ENCODE measurements at regions of chr1 and their contacts with region 1.

Region 1: DNA sequence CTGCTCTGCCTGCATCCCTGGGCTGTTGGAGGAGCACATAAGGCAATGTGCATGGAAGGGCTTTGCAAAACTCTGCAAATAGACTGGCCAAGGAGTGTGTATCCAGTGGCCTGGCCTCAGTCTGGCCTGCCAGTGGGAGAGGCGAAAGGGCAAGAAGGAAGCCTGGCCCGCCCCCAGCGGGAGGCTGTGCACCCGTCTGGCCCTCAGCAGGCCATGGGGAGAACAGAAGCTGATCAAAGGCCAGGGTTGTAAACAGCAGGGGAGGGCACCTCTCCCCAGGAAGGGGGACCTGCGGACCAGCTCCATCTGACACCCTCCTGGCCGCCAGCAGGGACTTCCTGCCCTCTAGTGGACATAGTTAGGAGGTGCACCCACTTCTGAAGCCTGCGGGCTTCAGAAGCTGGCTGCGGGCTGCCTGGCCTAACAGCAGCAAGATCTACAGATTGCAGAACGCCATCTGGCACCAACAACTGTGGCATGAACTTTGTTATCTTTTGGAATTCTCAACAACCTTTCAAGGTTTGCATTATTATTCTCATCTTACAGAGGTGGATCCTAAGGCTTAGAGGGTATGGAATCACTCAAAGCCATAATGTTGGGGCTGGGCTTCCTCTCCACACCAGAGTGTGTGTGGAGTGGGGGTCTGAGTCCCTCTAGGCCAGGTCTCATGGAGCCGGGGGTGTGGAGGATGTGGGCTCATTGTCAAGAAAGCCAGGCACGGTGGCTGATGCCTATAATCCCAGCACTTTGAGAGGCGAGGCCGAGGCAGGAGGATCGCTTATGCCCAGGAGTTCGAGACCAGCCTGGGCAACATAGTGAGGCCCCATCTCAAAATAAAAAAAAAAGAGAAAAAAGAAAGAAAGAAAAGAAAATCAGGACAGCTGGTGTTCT is 18.9 kb upstream of the CDK18 start:
- DNase-seq: peak; percentile 48 to 65
- H3K4me3 ChIP-seq: no peak overlapping the region
- H3K27ac ChIP-seq: no peak overlapping the region
- H3K4me1 ChIP-seq: no peaks in the 10 kb centered on the region
- H3K27me3 ChIP-seq: no peaks in the 10 kb centered on the region
- CTCF ChIP-seq: peak; percentile 85 to 96 (median 90)
- POLR2A ChIP-seq: no peak

Region 2: GRCh38 chr1:205344066-205344928 is 141.3 kb before region 1 on chr1:
- intact Hi-C with region 1: loop called (anchors 10 kb)
- DNase-seq: no peak
- H3K4me3 ChIP-seq: peak overlapping the region in 1 of 2 donors; percentile 36
- H3K27ac ChIP-seq: no peak overlapping the region
- H3K4me1 ChIP-seq: peaks cover 0 to 12% of the 10 kb centered on the region in 2 donors
- H3K27me3 ChIP-seq: peaks cover 0 to 12% of the 10 kb centered on the region in 2 donors
- CTCF ChIP-seq: no peak
- POLR2A ChIP-seq: no peak

Region 3: DNA sequence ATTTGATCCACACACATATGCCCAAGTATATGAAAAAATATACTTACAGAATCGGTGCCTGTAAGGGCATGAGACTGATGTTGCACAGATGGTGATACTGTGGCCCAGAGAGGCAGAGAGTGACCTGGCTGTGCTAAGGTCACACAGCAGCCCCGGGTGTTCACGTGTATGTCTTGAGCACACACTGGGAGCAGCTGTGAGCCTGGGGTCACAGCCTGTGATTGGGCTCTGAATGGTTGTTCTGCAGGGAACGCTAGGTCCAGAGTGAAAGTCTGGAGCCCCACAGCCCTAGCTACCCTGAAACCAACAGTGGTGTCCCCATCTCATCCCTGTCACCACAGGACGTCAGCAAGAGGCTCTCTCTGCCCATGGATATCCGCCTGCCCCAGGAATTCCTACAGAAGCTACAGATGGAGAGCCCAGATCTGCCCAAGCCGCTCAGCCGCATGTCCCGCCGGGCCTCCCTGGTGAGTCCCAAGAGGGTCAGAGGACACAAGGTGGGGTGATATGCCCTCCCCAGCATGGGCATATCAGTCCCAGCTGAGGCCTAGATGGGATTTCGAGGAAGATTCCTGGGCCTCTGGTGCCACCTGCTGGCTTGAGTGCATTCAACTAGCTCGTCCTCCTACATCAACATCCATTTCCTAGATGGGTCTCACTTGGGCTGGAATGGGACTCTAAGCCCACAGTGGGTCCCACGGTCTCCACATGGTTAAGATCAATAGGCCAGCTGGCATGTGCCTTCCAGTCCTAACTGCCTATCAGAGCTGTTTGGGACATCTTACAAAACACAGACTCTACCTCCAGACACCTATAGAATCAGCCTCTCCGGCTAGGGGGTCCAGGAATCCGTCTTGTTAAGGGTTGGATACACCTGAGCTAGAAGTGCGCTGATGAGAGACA is 38.6 kb after region 1 on chr1:
- intact Hi-C with region 1: loop called (anchors 5 kb)
- DNase-seq: peak; percentile 77 to 85
- H3K4me3 ChIP-seq: no peak overlapping the region
- H3K27ac ChIP-seq: no peak overlapping the region
- H3K4me1 ChIP-seq: peaks cover 4 to 22% of the 10 kb centered on the region in 2 donors
- H3K27me3 ChIP-seq: no peaks in the 10 kb centered on the region
- CTCF ChIP-seq: peak; percentile 75 to 90 (median 83)
- POLR2A ChIP-seq: no peak